ENCODE measurements at regions of chr1 and their contacts with region 1.

Region 1: GRCh38 chr1:240189386-240189989 is 97.8 kb downstream of the FMN2 start:
- DNase-seq: peak in 1 of 2 donors; percentile 33
- ATAC-seq: peak in 1 of 3 donors; percentile 51
- H3K4me3 ChIP-seq: no peak overlapping the region
- H3K4me3 Mint-ChIP-seq: no peak overlapping the region
- H3K27ac ChIP-seq: no peak overlapping the region
- H3K27ac Mint-ChIP-seq: no peak overlapping the region
- H3K4me1 ChIP-seq: no peaks in the 10 kb centered on the region
- H3K4me1 Mint-ChIP-seq: peaks cover 5% of the 10 kb centered on the region in 2 donors
- H3K27me3 ChIP-seq: no peaks in the 10 kb centered on the region
- H3K27me3 Mint-ChIP-seq: peaks cover 13 to 43% of the 10 kb centered on the region in 2 donors
- CTCF ChIP-seq: peak; percentile 82

Region 2: DNA sequence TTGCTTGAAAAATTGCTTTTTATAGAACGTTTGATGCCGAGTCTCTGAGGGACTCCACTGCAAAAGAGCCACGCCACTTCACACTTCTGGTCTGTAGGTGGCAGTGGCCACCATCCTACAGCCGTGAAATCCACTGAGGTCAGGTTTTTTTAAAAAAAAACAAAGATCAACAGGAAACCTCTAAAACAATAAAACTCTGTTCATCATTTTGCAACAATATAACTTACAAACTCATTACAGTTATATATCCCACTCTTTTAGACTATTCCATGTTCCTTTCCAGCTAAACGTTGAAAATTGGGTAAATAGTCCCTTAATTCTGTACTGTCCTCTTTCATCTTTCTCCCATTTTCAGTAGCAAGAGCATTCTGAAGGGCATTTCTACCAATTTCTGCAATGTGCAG is 162.4 kb before region 1 on chr1:
- intact Hi-C with region 1: loop called (anchors 10 kb)
- DNase-seq: peak in 1 of 2 donors; percentile 5
- ATAC-seq: peak in 2 of 3 donors; percentile 39 to 64
- H3K4me3 ChIP-seq: no peak overlapping the region
- H3K4me3 Mint-ChIP-seq: no peak overlapping the region
- H3K27ac ChIP-seq: no peak overlapping the region
- H3K27ac Mint-ChIP-seq: no peak overlapping the region
- H3K4me1 ChIP-seq: no peaks in the 10 kb centered on the region
- H3K4me1 Mint-ChIP-seq: no peaks in the 10 kb centered on the region
- H3K27me3 ChIP-seq: no peaks in the 10 kb centered on the region
- H3K27me3 Mint-ChIP-seq: peaks cover 4 to 6% of the 10 kb centered on the region in 2 donors
- CTCF ChIP-seq: no peak

Region 3: GRCh38 chr1:240122639-240123613 is 66.6 kb before region 1 on chr1:
- intact Hi-C with region 1: no loop called
- DNase-seq: no peak
- ATAC-seq: no peak
- H3K4me3 ChIP-seq: no peak overlapping the region
- H3K4me3 Mint-ChIP-seq: no peak overlapping the region
- H3K27ac ChIP-seq: no peak overlapping the region
- H3K27ac Mint-ChIP-seq: no peak overlapping the region
- H3K4me1 ChIP-seq: no peaks in the 10 kb centered on the region
- H3K4me1 Mint-ChIP-seq: no peaks in the 10 kb centered on the region
- H3K27me3 ChIP-seq: no peaks in the 10 kb centered on the region
- H3K27me3 Mint-ChIP-seq: peaks cover 3 to 5% of the 10 kb centered on the region in 2 donors
- CTCF ChIP-seq: no peak

Region 4: GRCh38 chr1:240404246-240404645 is 214.8 kb after region 1 on chr1:
- intact Hi-C with region 1: no loop called
- DNase-seq: no peak
- ATAC-seq: no peak
- H3K4me3 ChIP-seq: no peak overlapping the region
- H3K4me3 Mint-ChIP-seq: no peak overlapping the region
- H3K27ac ChIP-seq: no peak overlapping the region
- H3K27ac Mint-ChIP-seq: no peak overlapping the region
- H3K4me1 ChIP-seq: no peaks in the 10 kb centered on the region
- H3K4me1 Mint-ChIP-seq: no peaks in the 10 kb centered on the region
- H3K27me3 ChIP-seq: no peaks in the 10 kb centered on the region
- H3K27me3 Mint-ChIP-seq: peaks cover 0 to 6% of the 10 kb centered on the region in 2 donors
- CTCF ChIP-seq: no peak

Measured in natural killer cell (primary cell).